ENCODE measurements at regions of chr1 and their contacts with region 1.

Region 1: GRCh38 chr1:119682141-119682540 is 29.6 kb upstream of the PHGDH start:
- DNase-seq: no peak
- ATAC-seq: no peak
- H3K4me3 ChIP-seq: no peak overlapping the region
- H3K27ac ChIP-seq: no peak overlapping the region
- H3K4me1 ChIP-seq: peaks cover 0 to 6% (median 0%) of the 10 kb centered on the region in 4 donors
- H3K27me3 ChIP-seq: no peaks in the 10 kb centered on the region
- CTCF ChIP-seq: no peak
- POLR2A ChIP-seq: no peak

Region 2: DNA sequence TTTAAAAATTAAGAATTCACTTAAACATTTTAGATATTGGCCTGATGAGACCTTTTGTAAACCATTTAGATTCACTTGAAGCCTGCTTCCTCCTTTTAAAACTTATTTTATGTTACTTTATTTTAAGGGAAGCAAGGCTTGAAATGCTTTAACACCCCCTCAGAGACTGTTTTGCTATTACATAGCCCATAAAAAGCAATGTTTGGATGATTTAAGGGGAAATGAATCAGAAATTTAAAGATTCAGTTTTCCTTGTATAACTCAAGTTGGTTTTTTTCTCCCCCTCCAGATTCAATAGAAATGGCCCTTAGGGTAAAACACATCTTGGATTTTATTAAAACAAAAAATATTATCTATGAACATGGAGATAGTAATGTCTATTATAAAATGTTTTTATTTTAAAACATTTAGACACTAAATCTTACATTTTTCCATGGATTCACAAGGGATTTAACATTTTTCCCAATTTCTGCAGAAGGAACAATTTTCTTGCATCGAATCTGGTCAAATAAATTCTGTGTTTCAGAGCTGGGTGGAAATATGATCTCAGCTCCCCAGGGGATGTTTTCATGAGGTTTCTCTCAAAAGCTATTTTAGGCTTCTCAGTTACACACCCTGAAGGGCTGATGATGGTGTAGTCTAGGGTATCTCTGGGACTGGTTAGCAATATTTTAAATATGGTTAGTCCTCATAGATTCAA is 472.4 kb before region 1 on chr1:
- intact Hi-C with region 1: no loop called
- DNase-seq: no peak
- ATAC-seq: no peak
- H3K4me3 ChIP-seq: no peak overlapping the region
- H3K27ac ChIP-seq: no peak overlapping the region
- H3K4me1 ChIP-seq: no peaks in the 10 kb centered on the region
- H3K27me3 ChIP-seq: no peaks in the 10 kb centered on the region
- CTCF ChIP-seq: no peak
- POLR2A ChIP-seq: no peak

Region 3: DNA sequence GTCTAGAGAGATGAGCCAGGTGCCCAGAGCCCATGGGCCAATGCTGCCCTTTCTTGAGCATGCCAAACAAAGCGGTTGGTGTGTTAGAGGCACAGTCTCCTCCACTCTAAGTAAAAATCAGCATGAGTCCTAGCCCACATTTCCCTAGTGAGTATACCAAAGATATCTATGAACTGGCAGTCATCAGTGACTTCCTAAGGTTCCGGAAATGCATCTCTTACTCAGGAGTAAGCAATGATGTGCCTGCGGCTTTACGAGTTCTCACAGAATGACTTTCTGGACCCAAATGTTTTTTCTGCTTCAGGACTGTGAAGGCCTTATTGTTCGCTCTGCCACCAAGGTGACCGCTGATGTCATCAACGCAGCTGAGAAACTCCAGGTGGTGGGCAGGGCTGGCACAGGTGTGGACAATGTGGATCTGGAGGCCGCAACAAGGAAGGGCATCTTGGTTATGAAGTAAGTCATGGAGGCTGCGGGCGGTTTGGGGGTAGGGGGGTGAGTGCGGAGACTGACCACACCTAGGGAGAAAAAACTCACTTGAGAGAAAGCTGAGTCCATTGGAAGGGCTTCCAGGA is 38.8 kb after region 1 on chr1:
- intact Hi-C with region 1: loop called in 1 of 2 experiments (anchors 5 kb)
- DNase-seq: no peak
- ATAC-seq: no peak
- H3K4me3 ChIP-seq: no peak overlapping the region
- H3K27ac ChIP-seq: no peak overlapping the region
- H3K4me1 ChIP-seq: peaks cover 0 to 33% (median 11%) of the 10 kb centered on the region in 4 donors
- H3K27me3 ChIP-seq: no peaks in the 10 kb centered on the region
- CTCF ChIP-seq: no peak
- POLR2A ChIP-seq: no peak

Measured in right lobe of liver (tissue), 6 donors.